Naive thymus-derived CD4-positive, alpha-beta T cell (primary cell): ENCODE measurements at regions of chr19 and their contacts with region 1.

Region 1: GRCh38 chr19:4342615-4343369 is 570 bp upstream of the MPND start:
- DNase-seq: peak; percentile 73 to 98 (median 97)
- ATAC-seq: peak; percentile 88
- H3K4me3 ChIP-seq: peak overlapping the region; percentile 100
- H3K4me3 Mint-ChIP-seq: peak overlapping the region; percentile 88 to 95 (median 92)
- H3K27ac ChIP-seq: peak overlapping the region; percentile 81
- H3K27ac Mint-ChIP-seq: peak overlapping the region; percentile 86 to 97 (median 94)
- H3K4me1 ChIP-seq: peaks cover 8 to 20% of the 10 kb centered on the region in 2 donors
- H3K4me1 Mint-ChIP-seq: peaks cover 20 to 46% (median 30%) of the 10 kb centered on the region in 7 donors
- H3K27me3 ChIP-seq: no peaks in the 10 kb centered on the region
- H3K27me3 Mint-ChIP-seq: peaks cover 0 to 2% (median 0%) of the 10 kb centered on the region in 5 donors

Region 2: DNA sequence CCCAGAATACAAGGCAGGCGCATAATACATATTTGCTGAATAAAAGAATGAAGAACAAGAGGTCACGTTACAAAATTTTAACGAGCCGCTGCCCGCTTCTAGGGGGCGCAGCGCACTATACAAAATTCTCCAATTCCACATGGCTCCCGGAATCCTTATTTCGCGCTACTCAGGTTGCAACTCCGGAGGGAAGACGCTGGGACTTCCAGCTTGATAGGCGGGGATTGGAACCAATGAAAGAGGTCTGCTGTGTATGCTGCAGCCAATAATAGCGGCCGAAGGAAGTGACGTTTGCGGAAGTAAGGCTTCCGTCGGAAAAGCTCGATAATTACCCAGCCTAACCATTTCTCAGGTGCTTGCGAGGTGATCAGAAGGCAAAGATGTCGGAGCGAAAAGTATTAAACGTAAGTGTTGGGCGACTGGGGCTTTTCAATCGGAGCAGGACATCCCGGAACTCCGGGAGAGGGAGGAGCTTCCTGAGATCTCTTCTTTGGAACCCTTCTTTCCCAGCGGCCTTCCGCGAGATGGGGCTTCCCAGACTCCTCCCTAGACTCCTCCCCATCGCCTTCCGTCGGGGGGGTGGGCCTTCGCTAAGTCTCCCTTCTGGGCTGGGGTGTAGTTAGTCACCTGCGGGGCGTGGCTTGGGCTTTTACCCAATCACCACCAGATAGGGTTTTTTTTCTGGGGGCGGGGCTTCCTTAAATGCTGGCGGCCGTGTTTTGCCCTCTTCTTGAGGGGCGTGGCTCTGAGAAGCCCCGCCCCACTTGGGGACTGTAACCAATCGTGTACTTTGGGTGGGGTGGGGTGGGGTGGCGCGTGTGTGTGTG is 95.8 kb before region 1 on chr19 and contains the start of gene YJU2:
- CTCF ChIA-PET with region 1: interaction called, 3 read pairs
- POLR2A ChIA-PET with region 1: interaction called, 14 read pairs
- intact Hi-C with region 1: loop called (anchors 1 kb)
- DNase-seq: peak; percentile 92 to 100 (median 99)
- ATAC-seq: peak; percentile 96
- H3K4me3 ChIP-seq: peak within 1 kb of the TSS; percentile 100
- H3K4me3 Mint-ChIP-seq: peak within 1 kb of the TSS; percentile 85 to 98 (median 96)
- H3K27ac ChIP-seq: peak within 1 kb of the TSS; percentile 99
- H3K27ac Mint-ChIP-seq: peak within 1 kb of the TSS; percentile 97 to 100 (median 99)
- H3K4me1 ChIP-seq: peaks cover 12 to 13% of the 10 kb centered on the region in 2 donors
- H3K4me1 Mint-ChIP-seq: peaks cover 10 to 33% (median 24%) of the 10 kb centered on the region in 7 donors
- H3K27me3 ChIP-seq: no peaks in the 10 kb centered on the region
- H3K27me3 Mint-ChIP-seq: peaks cover 0 to 2% (median 0%) of the 10 kb centered on the region in 5 donors
- total RNA-seq, gene YJU2: 28.5 to 42.1 (median 31.9) TPM

Region 3: DNA sequence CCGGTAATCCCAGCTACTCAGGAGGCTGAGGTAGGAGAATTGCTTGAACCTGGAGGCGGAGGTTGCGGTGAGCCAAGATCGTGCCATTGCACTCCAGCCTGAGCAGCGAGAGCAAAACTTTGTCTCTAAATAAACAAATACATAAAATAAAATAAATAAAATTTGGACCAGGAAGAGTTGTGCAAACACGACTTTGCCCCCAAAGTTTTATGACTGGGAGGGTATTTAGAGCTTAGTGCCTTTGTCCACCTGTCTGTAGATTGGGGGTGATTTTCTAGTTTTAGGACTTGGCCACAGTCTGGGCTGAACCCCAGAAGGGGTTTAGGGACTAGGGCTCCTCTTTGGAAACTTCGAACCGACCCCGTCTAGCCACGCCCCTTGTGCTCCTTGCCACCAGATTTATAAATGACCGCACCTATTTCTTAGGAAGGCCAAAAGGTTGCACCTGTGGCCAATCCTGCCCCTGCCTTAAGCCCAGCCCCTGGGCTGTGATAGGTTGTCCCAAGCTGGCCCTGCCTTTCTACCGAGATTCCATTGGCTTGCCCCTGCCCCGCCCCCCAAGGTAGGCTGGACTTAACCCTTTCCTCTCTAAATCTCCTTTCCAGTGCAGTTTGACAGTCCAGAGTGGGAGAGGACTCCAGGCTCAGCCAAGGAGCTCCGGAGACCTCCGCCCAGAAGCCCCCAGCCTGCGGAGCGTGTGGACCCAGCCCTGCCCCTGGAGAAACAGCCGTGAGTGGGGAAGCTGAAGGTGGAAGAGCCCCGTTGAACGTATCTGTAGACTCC is 58.4 kb before region 1 on chr19:
- CTCF ChIA-PET with region 1: no interaction called
- POLR2A ChIA-PET with region 1: no interaction called
- intact Hi-C with region 1: no loop called
- DNase-seq: no peak
- ATAC-seq: no peak
- H3K4me3 ChIP-seq: no peak overlapping the region
- H3K4me3 Mint-ChIP-seq: no peak overlapping the region
- H3K27ac ChIP-seq: no peak overlapping the region
- H3K27ac Mint-ChIP-seq: peak overlapping the region in 1 of 9 donors; percentile 63
- H3K4me1 ChIP-seq: peaks cover 0 to 8% of the 10 kb centered on the region in 2 donors
- H3K4me1 Mint-ChIP-seq: peaks cover 0 to 6% (median 0%) of the 10 kb centered on the region in 7 donors
- H3K27me3 ChIP-seq: peaks cover 0 to 7% of the 10 kb centered on the region in 2 donors
- H3K27me3 Mint-ChIP-seq: peaks cover 4 to 20% (median 10%) of the 10 kb centered on the region in 5 donors

Region 4: GRCh38 chr19:4304530-4305252 is 38.1 kb before region 1 on chr19 and contains the start of gene FSD1:
- CTCF ChIA-PET with region 1: no interaction called
- POLR2A ChIA-PET with region 1: interaction called, 29 read pairs
- intact Hi-C with region 1: loop called (anchors 1 to 5 kb)
- DNase-seq: peak; percentile 32 to 89 (median 56)
- ATAC-seq: peak; percentile 65
- H3K4me3 ChIP-seq: peak within 1 kb of the TSS; percentile 43
- H3K4me3 Mint-ChIP-seq: peak within 1 kb of the TSS; percentile 59 to 98 (median 79)
- H3K27ac ChIP-seq: peak within 1 kb of the TSS; percentile 35
- H3K27ac Mint-ChIP-seq: peak within 1 kb of the TSS in 8 of 9 donors; percentile 48 to 96 (median 84)
- H3K4me1 ChIP-seq: peaks cover 4 to 28% of the 10 kb centered on the region in 2 donors
- H3K4me1 Mint-ChIP-seq: peaks cover 8 to 43% (median 33%) of the 10 kb centered on the region in 7 donors
- H3K27me3 ChIP-seq: no peaks in the 10 kb centered on the region
- H3K27me3 Mint-ChIP-seq: no peaks in the 10 kb centered on the region
- total RNA-seq, gene FSD1: 1.8 to 18.9 (median 3.4) TPM

Region 5: DNA sequence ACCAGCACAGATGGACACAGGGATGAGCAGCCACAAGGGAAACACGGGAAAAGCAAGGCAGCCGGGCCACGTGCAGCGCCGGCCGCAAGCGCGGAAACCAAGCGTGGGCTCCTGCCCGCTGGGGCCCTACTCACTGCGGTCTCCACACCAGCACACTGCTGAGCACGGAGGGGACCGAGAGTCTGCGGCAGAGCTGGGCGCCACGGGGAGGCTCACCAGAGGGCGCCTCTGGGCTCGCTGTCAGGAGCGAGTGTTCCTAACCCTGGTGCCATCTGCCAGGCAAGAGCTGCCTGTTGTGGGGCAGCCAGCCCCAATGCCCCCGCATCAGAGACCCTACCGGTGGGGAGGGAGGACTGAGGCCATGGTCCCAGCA is 27.1 kb after region 1 on chr19:
- CTCF ChIA-PET with region 1: interaction called, 3 read pairs
- POLR2A ChIA-PET with region 1: interaction called, 7 read pairs
- intact Hi-C with region 1: loop called (anchors 1 to 2 kb)
- DNase-seq: peak; percentile 55 to 80 (median 67)
- ATAC-seq: peak; percentile 80
- H3K4me3 ChIP-seq: peak overlapping the region; percentile 76
- H3K4me3 Mint-ChIP-seq: peak overlapping the region; percentile 87 to 97 (median 94)
- H3K27ac ChIP-seq: peak overlapping the region; percentile 68
- H3K27ac Mint-ChIP-seq: peak overlapping the region; percentile 81 to 96 (median 94)
- H3K4me1 ChIP-seq: peaks cover 21 to 32% of the 10 kb centered on the region in 2 donors
- H3K4me1 Mint-ChIP-seq: peaks cover 22 to 57% (median 42%) of the 10 kb centered on the region in 7 donors
- H3K27me3 ChIP-seq: no peaks in the 10 kb centered on the region
- H3K27me3 Mint-ChIP-seq: no peaks in the 10 kb centered on the region

Region 6: GRCh38 chr19:4660181-4660791 is 317.5 kb after region 1 on chr19:
- CTCF ChIA-PET with region 1: no interaction called
- POLR2A ChIA-PET with region 1: no interaction called
- intact Hi-C with region 1: no loop called
- DNase-seq: peak in 1 of 9 donors; percentile 20
- ATAC-seq: peak; percentile 26
- H3K4me3 ChIP-seq: no peak overlapping the region
- H3K4me3 Mint-ChIP-seq: no peak overlapping the region
- H3K27ac ChIP-seq: no peak overlapping the region
- H3K27ac Mint-ChIP-seq: peak overlapping the region in 1 of 9 donors; percentile 34
- H3K4me1 ChIP-seq: no peaks in the 10 kb centered on the region
- H3K4me1 Mint-ChIP-seq: peaks cover 0 to 10% (median 4%) of the 10 kb centered on the region in 7 donors
- H3K27me3 ChIP-seq: no peaks in the 10 kb centered on the region
- H3K27me3 Mint-ChIP-seq: no peaks in the 10 kb centered on the region

Region 7: GRCh38 chr19:4977299-4978174 is 634.7 kb after region 1 on chr19:
- CTCF ChIA-PET with region 1: no interaction called
- POLR2A ChIA-PET with region 1: no interaction called
- intact Hi-C with region 1: no loop called
- DNase-seq: no peak
- ATAC-seq: no peak
- H3K4me3 ChIP-seq: no peak overlapping the region
- H3K4me3 Mint-ChIP-seq: peak overlapping the region in 1 of 10 donors; percentile 45
- H3K27ac ChIP-seq: no peak overlapping the region
- H3K27ac Mint-ChIP-seq: no peak overlapping the region
- H3K4me1 ChIP-seq: no peaks in the 10 kb centered on the region
- H3K4me1 Mint-ChIP-seq: peaks cover 9 to 44% (median 32%) of the 10 kb centered on the region in 7 donors
- H3K27me3 ChIP-seq: no peaks in the 10 kb centered on the region
- H3K27me3 Mint-ChIP-seq: no peaks in the 10 kb centered on the region